ENCODE measurements at regions of chr10 and their contacts with region 1.

Region 1: DNA sequence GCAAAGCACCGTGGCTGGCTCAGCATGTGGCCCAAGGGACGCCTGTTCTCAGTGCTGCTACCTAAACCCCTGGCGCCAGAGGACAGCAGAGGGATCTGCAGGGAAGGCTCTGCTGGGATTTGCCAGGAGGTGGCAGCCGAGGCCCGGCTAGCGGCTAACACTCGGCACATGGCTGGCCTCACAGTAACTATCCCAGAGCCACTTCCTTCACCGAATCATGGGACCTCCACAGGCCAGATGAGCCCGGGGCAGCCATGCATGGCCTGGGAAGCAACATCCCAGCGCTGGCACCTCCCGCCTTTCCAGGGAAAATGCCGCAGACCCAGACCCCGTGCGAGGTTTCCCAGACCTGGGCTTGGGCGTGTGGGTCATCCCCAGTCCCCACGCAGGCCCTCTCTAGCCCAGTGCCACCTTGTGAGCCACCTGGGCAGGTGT is 36.4 kb downstream of the DPYSL4 start:
- DNase-seq: peak; percentile 71 to 80 (median 74)
- ATAC-seq: peak; percentile 100
- H3K4me3 ChIP-seq: no peak overlapping the region
- H3K27ac ChIP-seq: no peak overlapping the region
- H3K4me1 ChIP-seq: peaks cover 0 to 25% of the 10 kb centered on the region in 2 experiments; a peak in 2 of 5 replicates
- H3K27me3 ChIP-seq: peaks cover 0 to 14% of the 10 kb centered on the region in 2 experiments; a peak in 2 of 5 replicates
- CTCF ChIP-seq: peak; percentile 91 to 100 (median 99)
- EP300 ChIP-seq: no peak
- POLR2A ChIP-seq: no peak
- RAD21 ChIP-seq: peak; percentile 89 to 94

Region 2: DNA sequence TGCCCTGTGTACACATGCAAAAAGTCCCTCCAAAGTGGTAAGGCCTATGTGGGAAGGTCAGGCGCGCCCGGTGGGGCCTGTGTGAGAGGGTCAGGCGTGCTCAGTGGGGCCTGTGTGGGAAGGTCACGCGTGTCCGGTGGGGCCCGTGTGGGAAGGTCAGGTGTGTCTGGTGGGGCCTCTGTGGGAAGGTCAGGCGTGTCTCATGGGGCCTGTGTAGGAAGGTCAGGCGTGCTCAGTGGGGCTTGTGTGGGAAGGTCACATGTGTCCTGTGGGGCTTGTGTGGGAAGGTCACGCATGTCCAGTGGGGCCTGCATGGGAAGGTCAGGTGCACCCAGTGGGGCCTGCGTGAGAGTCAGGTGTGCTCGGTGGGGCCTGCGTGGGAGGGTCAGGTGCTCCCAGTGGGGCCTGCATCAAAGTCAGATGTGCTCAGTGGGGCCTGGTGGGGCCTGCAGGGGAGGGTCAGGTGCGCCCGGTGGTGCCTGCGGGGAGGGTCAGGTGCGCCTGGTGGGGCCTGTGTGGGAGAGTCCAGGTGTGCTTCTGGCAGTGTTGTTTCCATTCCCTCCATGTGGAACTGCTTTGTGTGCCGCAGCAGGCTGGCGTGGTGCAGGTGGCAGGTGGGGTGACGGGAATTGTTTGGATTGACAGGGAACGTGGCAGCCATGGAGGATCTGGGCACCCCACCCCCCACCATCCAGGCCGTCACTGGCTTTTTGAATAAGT is 124.2 kb after region 1 on chr10:
- CTCF ChIA-PET with region 1: interaction called, 4 read pairs
- POLR2A ChIA-PET with region 1: no interaction called
- in situ Hi-C with region 1: loop called (anchors 5 kb)
- intact Hi-C with region 1: loop called (anchors 1 kb)
- DNase-seq: no peak
- ATAC-seq: no peak
- H3K4me3 ChIP-seq: no peak overlapping the region
- H3K27ac ChIP-seq: no peak overlapping the region
- H3K4me1 ChIP-seq: peaks cover 0 to 4% of the 10 kb centered on the region in 2 experiments; a peak in 2 of 5 replicates
- H3K27me3 ChIP-seq: no peaks in the 10 kb centered on the region
- CTCF ChIP-seq: no peak
- EP300 ChIP-seq: no peak
- POLR2A ChIP-seq: no peak
- RAD21 ChIP-seq: no peak

Region 3: GRCh38 chr10:132452631-132453469 is 229.7 kb after region 1 on chr10:
- CTCF ChIA-PET with region 1: interaction called, 14 read pairs
- POLR2A ChIA-PET with region 1: no interaction called
- in situ Hi-C with region 1: loop called (anchors 5 kb)
- intact Hi-C with region 1: loop called (anchors 1 kb)
- DNase-seq: peak; percentile 72 to 91 (median 88)
- ATAC-seq: peak; percentile 85
- H3K4me3 ChIP-seq: no peak overlapping the region
- H3K27ac ChIP-seq: no peak overlapping the region; the same call in 2 of the 3 replicates
- H3K4me1 ChIP-seq: peaks cover 13 to 74% of the 10 kb centered on the region in 2 experiments
- H3K27me3 ChIP-seq: no peaks in the 10 kb centered on the region
- CTCF ChIP-seq: peak; percentile 81 to 91 (median 82)
- EP300 ChIP-seq: no peak
- POLR2A ChIP-seq: no peak
- RAD21 ChIP-seq: peak; percentile 95